Left ventricle myocardium inferior (tissue), 1 donor: ENCODE measurements at regions of chr1 and their contacts with region 1.

Region 1: DNA sequence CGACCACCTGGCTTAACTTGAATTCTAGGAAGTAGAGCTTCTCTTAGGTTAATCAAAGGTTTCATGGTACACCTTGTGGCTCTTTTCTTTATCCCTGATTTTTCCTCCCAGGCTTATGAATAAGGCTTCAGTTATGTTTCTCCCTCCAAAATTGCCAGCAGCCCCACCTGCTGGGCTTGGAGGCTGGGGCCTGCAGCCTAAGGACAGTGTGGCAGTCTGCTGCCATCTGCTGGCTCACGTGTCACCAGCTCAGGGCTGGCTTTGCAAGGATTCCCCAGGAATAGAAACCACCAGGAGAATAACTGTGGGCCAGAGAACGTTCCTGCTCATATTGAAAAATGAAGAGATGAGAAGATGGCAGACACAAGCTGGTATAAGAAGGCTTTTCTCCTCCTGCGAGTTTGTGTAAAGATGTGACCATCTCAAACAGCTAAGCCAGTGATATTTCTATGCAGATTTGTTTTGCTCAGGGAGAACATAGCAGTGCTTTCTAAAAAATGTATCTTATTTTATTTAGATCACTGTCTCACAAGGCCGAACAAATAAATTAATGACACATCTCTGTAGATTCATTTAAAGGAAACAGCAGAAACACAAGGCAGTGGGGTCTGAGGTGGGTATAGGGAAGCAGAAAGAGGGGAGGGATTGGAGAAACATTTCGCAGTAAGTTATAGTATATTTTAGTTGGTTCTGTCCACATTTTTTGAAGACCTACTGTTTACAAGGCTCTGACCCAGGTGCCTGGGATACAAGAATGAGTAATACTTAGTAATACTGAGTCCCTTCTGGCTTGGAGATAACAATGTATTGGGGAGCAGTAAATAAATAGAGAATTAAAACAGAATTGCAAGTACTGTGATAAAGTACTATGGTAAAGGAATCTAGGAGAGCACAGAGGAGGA is 291.1 kb upstream of the SGIP1 start:
- DNase-seq: peak; percentile 78
- H3K4me3 ChIP-seq: no peak overlapping the region
- H3K27ac ChIP-seq: no peak overlapping the region
- H3K4me1 ChIP-seq: no peaks in the 10 kb centered on the region
- H3K27me3 ChIP-seq: peaks cover 6% of the 10 kb centered on the region
- CTCF ChIP-seq: peak; percentile 99

Region 2: GRCh38 chr1:65958561-65959350 is 284.1 kb before region 1 on chr1:
- intact Hi-C with region 1: loop called (anchors 2 kb)
- DNase-seq: no peak
- H3K4me3 ChIP-seq: no peak overlapping the region
- H3K27ac ChIP-seq: no peak overlapping the region
- H3K4me1 ChIP-seq: no peaks in the 10 kb centered on the region
- H3K27me3 ChIP-seq: no peaks in the 10 kb centered on the region
- CTCF ChIP-seq: peak; percentile 78